HEK293T (cell line): ENCODE measurements at regions of chr13 and their contacts with region 1.

Region 1: GRCh38 chr13:75876360-75877050 is 240.4 kb downstream of the LMO7 start:
- DNase-seq: peak; percentile 87

Region 2: DNA sequence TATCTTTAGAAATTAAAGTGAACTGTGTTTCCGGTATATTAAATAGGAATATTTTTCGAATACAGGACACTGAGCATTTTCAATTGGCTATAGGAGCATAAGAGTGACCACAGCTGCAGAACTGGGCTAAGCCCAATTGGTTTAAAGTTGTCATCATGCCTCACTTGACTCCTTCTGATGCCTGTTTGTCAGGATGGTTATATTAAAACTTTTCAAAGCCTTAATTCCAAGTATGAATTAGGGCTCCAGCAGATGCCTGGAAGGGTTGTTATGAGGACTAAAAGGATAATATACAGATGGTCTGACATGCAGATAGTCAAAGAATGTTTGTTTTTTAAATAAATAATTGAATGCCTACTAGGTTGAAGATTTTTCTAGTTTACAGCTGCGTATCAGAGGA is 140.3 kb before region 1 on chr13:
- CTCF ChIA-PET with region 1: no interaction called
- POLR2A ChIA-PET with region 1: no interaction called
- DNase-seq: no peak

Region 3: DNA sequence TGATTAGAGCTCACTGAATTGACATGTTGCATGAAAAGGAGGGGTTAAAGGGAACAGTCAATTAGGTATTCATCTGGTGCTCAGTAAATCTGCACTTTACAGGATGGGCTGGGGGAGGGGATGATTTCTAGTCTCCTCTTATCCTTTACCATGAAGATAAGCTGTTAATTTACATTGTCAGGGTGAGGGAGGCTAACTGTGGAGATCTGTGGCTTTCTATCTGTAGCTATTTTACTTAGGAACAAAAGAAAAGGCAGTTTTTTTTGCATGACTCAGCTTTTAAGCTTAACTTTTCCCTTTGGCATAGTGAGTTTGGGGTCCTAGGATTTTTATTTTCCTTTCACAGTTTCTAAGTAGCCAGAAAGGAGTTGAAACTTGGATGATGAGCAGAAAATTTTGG is 12.9 kb after region 1 on chr13:
- CTCF ChIA-PET with region 1: interaction called, 18 read pairs
- POLR2A ChIA-PET with region 1: no interaction called
- DNase-seq: no peak

Region 4: GRCh38 chr13:75913925-75914324 is 37.4 kb after region 1 on chr13:
- CTCF ChIA-PET with region 1: no interaction called
- POLR2A ChIA-PET with region 1: no interaction called
- DNase-seq: no peak

Region 5: GRCh38 chr13:76016799-76017400 is 140.4 kb after region 1 on chr13:
- CTCF ChIA-PET with region 1: interaction called, 25 read pairs
- POLR2A ChIA-PET with region 1: no interaction called
- DNase-seq: peak; percentile 68

Region 6: DNA sequence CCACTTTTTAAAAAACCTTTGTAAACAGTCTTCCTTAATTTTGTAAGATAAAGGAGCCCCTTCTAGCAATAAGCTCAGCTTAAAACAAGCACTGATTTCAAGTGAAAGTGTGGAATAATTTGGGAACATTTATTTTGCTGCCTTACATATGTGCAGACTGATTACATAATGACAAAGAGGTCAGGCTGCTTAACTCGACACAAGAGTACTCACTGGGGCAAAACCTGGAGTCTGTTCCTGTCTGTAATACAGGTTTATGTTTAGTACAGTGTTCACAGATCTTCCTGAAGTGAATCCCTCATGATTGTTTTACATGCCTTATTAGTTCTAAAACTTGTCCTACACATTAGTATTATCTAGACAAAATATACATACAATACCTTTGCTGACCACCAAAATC is 369.4 kb after region 1 on chr13:
- CTCF ChIA-PET with region 1: no interaction called
- POLR2A ChIA-PET with region 1: no interaction called
- DNase-seq: no peak

Region 7: GRCh38 chr13:76473552-76474134 is 597.1 kb after region 1 on chr13:
- CTCF ChIA-PET with region 1: interaction called, 44 read pairs
- POLR2A ChIA-PET with region 1: no interaction called
- DNase-seq: peak; percentile 90